WTC11 (cell line): ENCODE measurements at regions of chr3 and their contacts with region 1.

Region 1: GRCh38 chr3:98343647-98344507 is 9.8 kb upstream of the OR5K4 start:
- DNase-seq: peak; percentile 54
- ATAC-seq: peak; percentile 89
- H3K4me3 Mint-ChIP-seq: no peak overlapping the region
- H3K27ac Mint-ChIP-seq: no peak overlapping the region
- H3K4me1 Mint-ChIP-seq: peaks cover 6% of the 10 kb centered on the region
- H3K27me3 Mint-ChIP-seq: no peaks in the 10 kb centered on the region
- CTCF ChIP-seq: peak; percentile 78

Region 2: GRCh38 chr3:98039322-98040024 is 304.4 kb before region 1 on chr3:
- CTCF ChIA-PET with region 1: interaction called, 15 read pairs
- POLR2A ChIA-PET with region 1: no interaction called
- DNase-seq: peak; percentile 61
- ATAC-seq: peak; percentile 94
- H3K4me3 Mint-ChIP-seq: peak overlapping the region; percentile 92
- H3K27ac Mint-ChIP-seq: peak overlapping the region; percentile 88; the same call in 1 of the 2 replicates
- H3K4me1 Mint-ChIP-seq: peaks cover 7% of the 10 kb centered on the region; the same call in 1 of the 2 replicates
- H3K27me3 Mint-ChIP-seq: no peaks in the 10 kb centered on the region
- CTCF ChIP-seq: peak; percentile 91

Region 3: DNA sequence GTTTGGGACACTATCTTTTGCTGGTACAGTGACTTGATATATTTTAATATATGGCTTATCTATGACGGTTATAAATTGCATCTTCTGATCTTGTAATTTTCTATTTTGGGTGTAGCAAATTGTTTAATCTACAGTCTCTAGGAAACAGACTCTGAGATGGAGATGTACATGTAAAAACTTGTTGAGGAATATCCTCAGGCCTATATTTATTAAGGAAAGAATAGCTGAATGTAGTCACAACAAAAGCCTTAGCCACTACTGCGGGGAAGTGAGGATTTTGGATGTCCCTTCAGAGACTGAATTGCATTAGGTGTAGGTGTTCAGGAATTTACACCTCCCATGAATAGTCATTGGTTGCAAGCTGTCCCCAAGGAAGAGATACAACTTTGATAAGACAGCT is 32.8 kb after region 1 on chr3:
- CTCF ChIA-PET with region 1: no interaction called
- POLR2A ChIA-PET with region 1: no interaction called
- DNase-seq: no peak
- ATAC-seq: no peak
- H3K4me3 Mint-ChIP-seq: no peak overlapping the region
- H3K27ac Mint-ChIP-seq: no peak overlapping the region
- H3K4me1 Mint-ChIP-seq: no peaks in the 10 kb centered on the region
- H3K27me3 Mint-ChIP-seq: no peaks in the 10 kb centered on the region
- CTCF ChIP-seq: no peak